ENCODE measurements at regions of chr18 and their contacts with region 1.

Region 1: GRCh38 chr18:30342675-30343074 is 699.9 kb downstream of the DSC3 start:
- DNase-seq: no peak

Region 2: DNA sequence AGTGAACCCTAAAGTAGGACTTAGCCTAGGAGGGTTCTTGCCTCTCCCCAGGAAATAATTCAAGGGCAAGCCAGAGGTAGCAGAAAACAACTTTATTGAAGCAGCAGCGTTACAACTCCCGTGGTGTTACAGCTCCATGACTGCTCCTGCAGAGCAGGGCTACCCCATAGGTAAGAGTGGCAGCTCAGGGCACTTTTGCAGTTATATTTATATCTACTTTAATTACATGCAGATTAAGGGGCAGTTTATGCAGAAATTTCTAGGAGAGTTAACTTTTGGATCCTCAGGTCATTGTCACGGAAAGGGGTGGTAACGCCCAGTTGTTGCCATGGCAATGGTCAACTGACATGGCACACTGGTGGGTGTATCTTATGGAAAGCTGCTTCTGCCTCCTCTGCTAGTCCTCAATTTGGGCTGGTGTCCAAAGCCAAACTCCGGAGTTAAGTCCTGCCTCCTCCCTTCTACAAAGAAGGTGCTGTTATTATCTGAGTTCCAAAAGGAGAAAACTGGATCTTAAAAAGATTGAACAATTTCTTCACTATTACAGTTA is 713.1 kb before region 1 on chr18:
- intact Hi-C with region 1: no loop called
- DNase-seq: no peak

Region 3: GRCh38 chr18:30298769-30299168 is 43.9 kb before region 1 on chr18:
- intact Hi-C with region 1: loop called (anchors 10 kb)
- DNase-seq: no peak